Activated T-helper 1 cell treated with anti-CD3 and anti-CD28 coated beads, Interleukin-12 subunit alpha, Interleukin-12 subunit beta, Interleukin-2, Interleukin-4 antibody, amounts not matched to agents 30 ng/mL and 10 ng/mL and 1 ng/mL, durations not matched to agents 14 hours and 24 hours and 36 hours (primary cell): ENCODE measurements at regions of chr11 and their contacts with region 1.

Region 1: DNA sequence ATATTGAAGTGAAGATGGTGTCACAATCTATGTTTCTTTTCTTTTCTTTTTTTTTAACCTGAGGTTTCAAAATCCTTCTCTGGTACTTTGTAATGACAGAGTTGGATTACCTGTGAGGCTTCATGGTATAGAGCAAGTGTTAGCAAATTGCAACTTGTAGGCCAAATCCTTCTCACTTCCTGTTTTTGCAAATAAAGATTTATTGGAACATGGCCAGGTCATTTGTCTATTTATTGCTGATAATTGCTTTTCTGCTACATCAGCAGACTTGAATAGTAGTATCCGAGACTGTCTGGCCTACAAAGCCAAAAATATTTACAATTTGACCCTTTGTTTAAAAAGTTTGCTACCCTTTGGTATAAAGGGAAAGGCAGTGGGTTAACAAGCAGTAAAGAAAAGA is 1059.4 kb upstream of the CCDC90B start:
- DNase-seq: no peak
- H3K4me3 Mint-ChIP-seq: no peak overlapping the region
- H3K27ac Mint-ChIP-seq: no peak overlapping the region
- H3K4me1 Mint-ChIP-seq: no peaks in the 10 kb centered on the region
- H3K27me3 Mint-ChIP-seq: no peaks in the 10 kb centered on the region

Region 2: DNA sequence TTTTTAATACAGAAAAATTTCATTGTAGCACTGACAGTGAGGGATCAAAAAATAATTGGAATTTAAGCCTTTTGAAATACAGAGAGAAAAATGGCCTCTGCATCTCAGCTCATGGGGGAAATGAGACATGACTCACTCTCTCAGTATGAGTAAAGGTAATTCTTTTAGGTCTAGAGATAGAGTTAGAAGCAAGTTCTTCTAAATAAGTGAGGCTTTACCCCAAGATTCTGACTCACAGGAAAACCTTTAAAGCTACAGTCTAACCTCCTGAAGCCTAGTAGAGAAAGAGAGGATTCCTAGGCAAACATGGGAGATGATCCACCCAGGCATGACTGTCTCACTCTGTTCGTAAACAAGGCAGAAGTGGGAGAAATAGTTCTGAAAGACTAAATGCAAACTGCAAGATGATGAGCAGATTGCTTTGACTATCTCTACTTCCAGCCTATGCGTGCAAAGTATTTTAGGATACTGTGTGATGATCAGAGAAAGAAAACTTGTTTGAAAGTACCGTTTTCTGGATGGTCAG is 56.2 kb before region 1 on chr11:
- intact Hi-C with region 1: loop called (anchors 10 kb)
- DNase-seq: no peak
- H3K4me3 Mint-ChIP-seq: no peak overlapping the region
- H3K27ac Mint-ChIP-seq: no peak overlapping the region
- H3K4me1 Mint-ChIP-seq: peaks cover 4% of the 10 kb centered on the region
- H3K27me3 Mint-ChIP-seq: peaks cover 2% of the 10 kb centered on the region

Region 3: GRCh38 chr11:84524422-84525051 is 178.9 kb after region 1 on chr11:
- intact Hi-C with region 1: no loop called
- DNase-seq: no peak
- H3K4me3 Mint-ChIP-seq: no peak overlapping the region
- H3K27ac Mint-ChIP-seq: no peak overlapping the region
- H3K4me1 Mint-ChIP-seq: no peaks in the 10 kb centered on the region
- H3K27me3 Mint-ChIP-seq: no peaks in the 10 kb centered on the region